Vagina (tissue), 2 donors: ENCODE measurements at regions of chr1 and their contacts with region 1.

Region 1: DNA sequence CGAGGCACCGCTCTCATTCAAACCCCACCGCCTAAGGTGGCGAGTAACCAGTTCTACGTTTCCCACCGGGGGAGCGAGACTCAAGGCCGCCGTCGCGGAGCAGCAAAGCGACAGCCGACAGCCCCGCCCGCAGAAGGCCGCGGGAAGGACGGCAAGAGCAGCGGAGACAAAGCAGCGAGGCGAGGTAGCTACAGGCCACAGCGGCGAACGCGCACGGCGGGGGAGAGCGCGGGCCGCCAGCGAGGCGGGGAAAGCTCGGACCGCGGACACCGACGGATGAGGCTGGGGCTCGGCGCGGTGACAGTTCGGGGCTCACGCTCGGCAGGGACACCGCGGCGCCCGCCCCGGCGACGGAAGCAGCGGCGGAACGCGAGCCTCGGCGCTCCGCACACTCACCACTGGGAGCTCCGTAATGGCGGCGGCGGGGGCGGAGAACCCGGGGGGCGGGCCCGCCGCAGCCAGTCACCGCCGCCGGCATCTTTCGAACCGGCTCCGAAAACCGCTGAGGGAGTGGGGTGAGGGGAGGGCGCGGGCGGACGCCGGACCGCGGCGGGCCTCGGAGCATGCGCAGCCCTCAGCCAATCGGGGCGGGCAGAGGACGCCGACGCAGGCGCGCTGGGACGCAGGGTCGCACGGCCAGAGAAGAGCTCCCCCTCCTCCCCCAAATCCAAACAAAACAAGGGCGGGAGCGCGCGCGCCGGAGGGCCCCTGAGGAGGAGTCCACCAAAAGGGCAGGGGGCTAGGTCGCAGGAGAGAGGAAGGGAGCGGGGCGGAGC is 666 bp downstream of the HP1BP3 start:
- DNase-seq: peak in 1 of 2 donors; percentile 97
- H3K4me3 ChIP-seq: peak overlapping the region; percentile 80
- H3K27ac ChIP-seq: peak overlapping the region; percentile 98
- H3K4me1 ChIP-seq: peaks cover 49% of the 10 kb centered on the region
- H3K27me3 ChIP-seq: no peaks in the 10 kb centered on the region
- CTCF ChIP-seq: no peak
- POLR2A ChIP-seq: peak in 1 of 2 donors; percentile 54

Region 2: GRCh38 chr1:18941221-18942141 is 1845.0 kb before region 1 on chr1:
- intact Hi-C with region 1: loop called (anchors 5 kb)
- DNase-seq: no peak
- H3K4me3 ChIP-seq: no peak overlapping the region
- H3K27ac ChIP-seq: peak overlapping the region; percentile 37
- H3K4me1 ChIP-seq: peaks cover 74% of the 10 kb centered on the region
- H3K27me3 ChIP-seq: no peaks in the 10 kb centered on the region
- CTCF ChIP-seq: no peak
- POLR2A ChIP-seq: no peak